ENCODE measurements at regions of chr7 and their contacts with region 1.

Region 1: DNA sequence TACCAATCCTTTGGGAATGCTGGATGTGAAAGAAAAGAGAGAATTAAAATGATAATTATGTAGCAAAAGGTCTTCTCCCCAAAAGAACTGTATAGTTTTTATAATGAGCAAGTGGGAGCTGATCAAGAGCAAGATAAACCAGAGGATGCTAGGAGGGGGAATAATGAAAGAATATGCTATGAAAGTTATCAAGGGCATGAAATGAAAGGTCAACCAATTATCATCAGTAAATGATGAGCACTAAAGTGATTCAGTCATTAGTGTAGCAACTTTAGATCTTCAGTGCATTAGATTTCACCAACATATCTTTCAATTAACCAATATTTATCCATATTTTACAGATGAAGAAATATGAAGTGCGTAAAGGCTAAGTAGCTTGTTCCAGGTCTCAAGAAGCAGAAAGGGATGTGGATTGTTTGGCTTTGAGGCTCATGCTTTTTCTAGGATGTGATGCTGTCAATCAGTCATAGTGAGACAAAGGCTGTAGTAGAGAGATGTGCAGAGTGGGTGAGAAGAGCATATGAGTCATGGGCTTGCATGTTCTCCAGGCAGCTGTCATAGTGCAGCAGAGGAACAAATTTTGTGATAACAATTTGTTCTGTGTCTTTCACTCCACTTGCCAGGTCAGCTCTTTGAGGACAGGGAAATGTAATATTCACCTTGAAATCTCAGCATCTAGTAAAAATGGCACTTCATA is 5.7 kb upstream of the OR2F2 start:
- DNase-seq: no peak
- H3K4me3 Mint-ChIP-seq: no peak overlapping the region
- H3K27ac Mint-ChIP-seq: no peak overlapping the region
- H3K4me1 Mint-ChIP-seq: peaks cover 17% of the 10 kb centered on the region
- H3K27me3 Mint-ChIP-seq: peaks cover 7% of the 10 kb centered on the region

Region 2: DNA sequence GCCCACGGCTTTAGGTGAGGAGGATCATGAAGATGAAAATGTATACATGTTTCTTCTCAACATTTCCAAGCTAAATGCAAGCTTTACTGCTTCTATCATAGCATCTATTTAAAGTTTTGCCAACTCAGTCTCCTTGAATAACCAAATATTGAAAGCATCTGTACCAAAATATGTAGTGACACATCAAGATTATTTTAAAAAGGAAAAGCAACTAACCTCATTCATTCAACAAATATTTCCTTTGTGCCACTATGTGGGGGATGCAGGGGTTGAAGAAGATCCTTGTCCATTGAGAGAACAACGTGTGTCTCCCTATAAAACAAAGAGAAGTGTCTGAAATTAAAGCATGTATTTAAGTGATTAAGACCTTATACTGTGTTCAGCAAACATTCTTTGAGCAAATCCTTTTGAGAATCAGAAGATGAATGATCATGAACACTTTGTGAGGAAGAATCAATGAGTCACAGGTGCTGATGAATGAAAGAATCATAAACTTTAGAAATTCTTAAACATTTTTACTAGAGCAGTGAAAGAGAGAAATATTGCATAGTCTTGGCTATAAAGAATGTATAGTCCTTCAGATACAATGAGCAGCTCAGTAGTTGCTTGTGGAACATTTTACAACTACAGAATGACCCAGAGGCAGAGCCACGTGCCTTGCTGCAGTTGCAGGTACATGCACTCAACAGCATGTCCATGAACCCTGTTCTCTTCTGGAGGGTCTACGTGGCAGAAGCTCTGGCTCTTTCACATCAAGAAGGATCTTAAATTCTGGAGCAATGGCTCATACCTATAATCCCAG is 472.2 kb before region 1 on chr7:
- intact Hi-C with region 1: no loop called
- DNase-seq: no peak
- H3K4me3 Mint-ChIP-seq: no peak overlapping the region
- H3K27ac Mint-ChIP-seq: no peak overlapping the region
- H3K4me1 Mint-ChIP-seq: no peaks in the 10 kb centered on the region
- H3K27me3 Mint-ChIP-seq: peaks cover 3% of the 10 kb centered on the region

Region 3: DNA sequence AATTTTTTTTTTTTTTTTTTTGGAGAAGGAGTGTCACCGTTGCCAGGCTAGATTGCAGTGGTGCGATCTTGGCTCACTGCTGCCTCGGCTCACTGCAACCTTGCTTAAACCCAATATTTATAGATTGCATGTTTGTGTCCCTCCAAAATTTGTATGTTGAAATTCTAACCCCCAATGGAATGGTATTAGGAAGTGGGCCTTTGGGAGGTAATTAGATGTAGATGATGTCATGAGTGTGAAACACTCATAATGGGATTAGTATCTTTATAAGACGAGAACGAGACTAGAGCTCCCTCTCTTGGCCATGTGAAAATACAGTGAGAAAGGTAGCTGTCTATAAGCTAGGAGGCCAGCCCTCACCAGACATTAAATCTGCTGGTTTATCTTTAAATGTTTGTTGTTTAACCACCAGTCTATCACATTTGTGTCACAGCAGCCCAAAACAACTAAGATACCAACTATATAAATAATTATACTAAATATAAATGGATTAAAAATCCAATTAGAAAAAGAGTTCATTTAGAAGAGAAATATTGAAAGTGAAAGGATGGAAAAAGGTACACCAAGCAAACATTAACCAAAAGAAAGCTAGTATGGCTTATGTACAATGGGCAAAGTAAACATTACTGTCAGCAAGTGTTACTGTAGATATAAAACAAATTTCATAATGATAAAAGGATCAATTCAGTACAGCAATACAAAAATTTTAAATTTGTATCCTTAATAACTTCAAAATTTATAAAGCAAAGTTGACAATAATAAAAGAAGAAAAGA is 36.7 kb before region 1 on chr7:
- intact Hi-C with region 1: no loop called
- DNase-seq: no peak
- H3K4me3 Mint-ChIP-seq: no peak overlapping the region
- H3K27ac Mint-ChIP-seq: no peak overlapping the region
- H3K4me1 Mint-ChIP-seq: peaks cover 3% of the 10 kb centered on the region
- H3K27me3 Mint-ChIP-seq: no peaks in the 10 kb centered on the region

Region 4: DNA sequence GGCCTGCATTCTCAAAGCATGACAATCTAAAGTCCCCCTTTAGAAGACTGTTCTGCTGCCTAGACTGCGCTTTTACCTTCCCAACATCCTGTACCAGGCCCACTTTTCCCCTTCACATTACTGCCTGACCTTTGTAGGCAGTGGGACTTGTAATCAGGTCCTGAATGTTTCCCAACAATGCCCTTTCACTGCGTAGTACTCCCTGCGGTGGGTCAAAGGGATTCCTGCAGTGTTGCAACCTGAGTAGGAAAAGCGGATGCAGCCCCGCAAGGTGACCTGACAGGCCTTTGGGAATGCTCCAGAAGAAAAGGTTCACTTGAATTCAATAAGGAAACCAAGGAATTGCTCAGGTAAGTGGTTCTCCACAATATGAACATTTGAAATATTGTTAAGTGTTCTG is 22.5 kb before region 1 on chr7:
- intact Hi-C with region 1: loop called (anchors 2 kb)
- DNase-seq: no peak
- H3K4me3 Mint-ChIP-seq: no peak overlapping the region
- H3K27ac Mint-ChIP-seq: no peak overlapping the region
- H3K4me1 Mint-ChIP-seq: peaks cover 8% of the 10 kb centered on the region
- H3K27me3 Mint-ChIP-seq: peaks cover 9% of the 10 kb centered on the region

Region 5: DNA sequence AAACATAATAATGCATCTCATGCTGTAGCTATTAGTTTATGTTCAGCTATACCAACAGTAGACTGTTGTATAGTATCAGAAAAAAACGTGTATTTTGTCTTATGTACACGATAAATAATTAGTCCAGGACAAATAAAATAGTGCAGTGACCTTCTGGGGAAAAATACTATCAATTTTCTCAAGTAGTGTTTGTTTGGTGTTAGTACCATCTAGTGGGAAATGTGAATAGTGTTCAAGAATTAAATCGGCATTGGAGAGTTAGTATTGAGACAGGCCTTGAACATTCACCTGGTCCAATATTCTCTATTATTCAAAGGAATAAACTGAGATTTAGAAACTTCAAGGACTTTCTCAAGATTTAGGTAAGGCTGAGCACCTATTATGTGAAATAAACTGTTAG is 97.7 kb after region 1 on chr7:
- intact Hi-C with region 1: loop called (anchors 10 kb)
- DNase-seq: no peak
- H3K4me3 Mint-ChIP-seq: no peak overlapping the region
- H3K27ac Mint-ChIP-seq: no peak overlapping the region
- H3K4me1 Mint-ChIP-seq: peaks cover 2% of the 10 kb centered on the region
- H3K27me3 Mint-ChIP-seq: peaks cover 12% of the 10 kb centered on the region